Activated CD4-positive, alpha-beta T cell treated with anti-CD3 and anti-CD28 coated beads for 36 hours (primary cell): ENCODE measurements at regions of chr1 and their contacts with region 1.

Region 1: DNA sequence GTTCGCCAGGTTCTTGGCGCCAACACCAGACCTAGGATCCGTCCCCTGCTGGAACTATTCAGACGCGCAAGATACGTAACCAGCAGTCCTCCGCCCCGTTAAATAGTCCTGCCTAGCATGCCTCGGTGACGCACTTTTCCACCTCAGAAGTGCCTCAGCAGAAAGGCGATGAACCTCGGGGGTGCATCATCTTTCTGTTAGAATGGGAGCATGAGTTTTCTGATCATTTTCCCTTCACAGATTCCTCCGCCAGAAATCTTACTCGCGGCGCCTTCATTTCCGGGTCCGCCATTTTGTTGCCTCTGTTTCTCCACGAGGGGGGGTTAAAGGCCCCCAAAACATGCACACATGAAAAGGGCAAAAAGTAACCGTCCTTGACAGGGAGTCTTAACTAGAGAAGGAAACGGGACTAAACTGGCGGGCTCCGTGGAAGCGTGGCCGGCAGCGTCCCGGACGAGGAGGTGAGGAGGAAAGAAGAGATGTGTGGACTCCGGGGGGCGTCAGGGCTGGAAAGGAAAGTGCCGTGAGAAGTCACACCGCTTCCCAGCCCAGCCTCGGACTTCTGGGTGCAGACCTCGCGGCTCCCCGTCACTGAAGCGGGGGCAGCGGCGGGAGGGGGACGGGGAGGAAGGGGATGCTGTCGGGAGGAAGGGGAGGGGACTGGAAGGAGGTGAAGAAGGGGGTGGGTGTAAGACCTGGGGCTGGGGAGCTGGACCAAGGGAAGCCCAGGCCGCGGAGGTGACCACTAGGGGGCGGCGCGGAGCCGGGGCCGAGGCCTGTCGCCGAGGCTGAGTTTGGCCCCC is at the start of gene GABPB2:
- DNase-seq: peak; percentile 93
- ATAC-seq: peak; percentile 86
- H3K4me3 Mint-ChIP-seq: peak within 1 kb of the TSS; percentile 99
- H3K27ac Mint-ChIP-seq: peak within 1 kb of the TSS; percentile 100
- H3K4me1 Mint-ChIP-seq: peaks cover 18% of the 10 kb centered on the region
- H3K27me3 Mint-ChIP-seq: no peaks in the 10 kb centered on the region
- total RNA-seq, gene GABPB2: 16.6 to 19.2 TPM

Region 2: GRCh38 chr1:150321826-150322166 is 748.9 kb before region 1 on chr1:
- CTCF ChIA-PET with region 1: no interaction called
- POLR2A ChIA-PET with region 1: no interaction called
- intact Hi-C with region 1: loop called in 1 of 2 experiments (anchors 5 kb)
- DNase-seq: no peak
- ATAC-seq: no peak
- H3K4me3 Mint-ChIP-seq: peak overlapping the region; percentile 93
- H3K27ac Mint-ChIP-seq: peak overlapping the region; percentile 100
- H3K4me1 Mint-ChIP-seq: peaks cover 27% of the 10 kb centered on the region
- H3K27me3 Mint-ChIP-seq: no peaks in the 10 kb centered on the region

Region 3: GRCh38 chr1:150813058-150813707 is 257.5 kb before region 1 on chr1:
- CTCF ChIA-PET with region 1: no interaction called
- POLR2A ChIA-PET with region 1: no interaction called
- intact Hi-C with region 1: no loop called
- DNase-seq: peak; percentile 43
- ATAC-seq: no peak
- H3K4me3 Mint-ChIP-seq: no peak overlapping the region
- H3K27ac Mint-ChIP-seq: no peak overlapping the region
- H3K4me1 Mint-ChIP-seq: peaks cover 1% of the 10 kb centered on the region
- H3K27me3 Mint-ChIP-seq: no peaks in the 10 kb centered on the region

Region 4: DNA sequence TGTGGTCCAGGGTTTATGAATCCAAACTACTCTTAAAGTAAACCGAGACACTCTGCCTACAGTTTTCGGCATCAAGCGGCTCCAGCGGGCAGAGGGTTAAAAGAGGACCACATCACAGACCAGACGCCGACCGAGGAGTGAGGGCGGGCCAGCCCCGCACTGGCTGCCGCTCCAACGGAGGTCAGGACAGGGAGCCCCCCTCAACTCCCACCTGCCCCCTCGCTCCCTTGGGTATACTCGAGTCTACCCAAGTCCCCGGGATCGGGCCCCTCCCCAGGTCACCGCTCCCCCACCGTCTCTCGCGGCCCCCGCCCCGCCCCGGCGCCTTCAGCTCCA is 194.6 kb before region 1 on chr1:
- CTCF ChIA-PET with region 1: no interaction called
- POLR2A ChIA-PET with region 1: no interaction called
- intact Hi-C with region 1: loop called in 1 of 2 experiments (anchors 2 kb)
- DNase-seq: no peak
- ATAC-seq: peak; percentile 37
- H3K4me3 Mint-ChIP-seq: peak overlapping the region; percentile 88
- H3K27ac Mint-ChIP-seq: peak overlapping the region; percentile 95
- H3K4me1 Mint-ChIP-seq: peaks cover 25% of the 10 kb centered on the region
- H3K27me3 Mint-ChIP-seq: no peaks in the 10 kb centered on the region

Region 5: GRCh38 chr1:151059078-151059907 is 11.4 kb before region 1 on chr1 and contains the start of gene CDC42SE1:
- CTCF ChIA-PET with region 1: interaction called, 24 read pairs
- POLR2A ChIA-PET with region 1: interaction called, 4 read pairs
- intact Hi-C with region 1: loop called (anchors 1 kb)
- DNase-seq: peak; percentile 92
- ATAC-seq: peak; percentile 75
- H3K4me3 Mint-ChIP-seq: peak within 1 kb of the TSS; percentile 93
- H3K27ac Mint-ChIP-seq: peak within 1 kb of the TSS; percentile 98
- H3K4me1 Mint-ChIP-seq: peaks cover 54% of the 10 kb centered on the region
- H3K27me3 Mint-ChIP-seq: no peaks in the 10 kb centered on the region
- total RNA-seq, gene CDC42SE1: 95.4 to 101 TPM

Region 6: DNA sequence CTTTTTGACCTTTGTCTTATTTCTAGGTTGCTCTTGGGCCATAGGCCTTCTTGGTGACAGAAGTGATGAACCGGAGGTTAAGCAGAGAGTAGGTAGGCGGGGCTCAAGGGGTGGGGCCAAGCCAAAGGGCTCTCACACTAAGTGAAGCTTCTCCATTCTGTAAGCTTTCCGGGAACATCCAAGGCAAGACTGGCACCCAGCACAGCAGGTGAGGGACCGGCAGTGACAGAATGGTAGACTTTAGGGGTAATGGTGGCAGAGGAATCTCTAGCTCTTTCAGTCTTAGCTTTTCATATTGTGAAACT is 85.8 kb after region 1 on chr1 and contains the start of gene TNFAIP8L2:
- CTCF ChIA-PET with region 1: interaction called, 4 read pairs
- POLR2A ChIA-PET with region 1: interaction called, 4 read pairs
- intact Hi-C with region 1: loop called (anchors 1 to 2 kb)
- DNase-seq: peak; percentile 91
- ATAC-seq: peak; percentile 85
- H3K4me3 Mint-ChIP-seq: peak within 1 kb of the TSS; percentile 88
- H3K27ac Mint-ChIP-seq: peak within 1 kb of the TSS; percentile 99
- H3K4me1 Mint-ChIP-seq: peaks cover 44% of the 10 kb centered on the region
- H3K27me3 Mint-ChIP-seq: no peaks in the 10 kb centered on the region
- total RNA-seq, gene TNFAIP8L2: 18.4 to 19.2 TPM

Region 7: DNA sequence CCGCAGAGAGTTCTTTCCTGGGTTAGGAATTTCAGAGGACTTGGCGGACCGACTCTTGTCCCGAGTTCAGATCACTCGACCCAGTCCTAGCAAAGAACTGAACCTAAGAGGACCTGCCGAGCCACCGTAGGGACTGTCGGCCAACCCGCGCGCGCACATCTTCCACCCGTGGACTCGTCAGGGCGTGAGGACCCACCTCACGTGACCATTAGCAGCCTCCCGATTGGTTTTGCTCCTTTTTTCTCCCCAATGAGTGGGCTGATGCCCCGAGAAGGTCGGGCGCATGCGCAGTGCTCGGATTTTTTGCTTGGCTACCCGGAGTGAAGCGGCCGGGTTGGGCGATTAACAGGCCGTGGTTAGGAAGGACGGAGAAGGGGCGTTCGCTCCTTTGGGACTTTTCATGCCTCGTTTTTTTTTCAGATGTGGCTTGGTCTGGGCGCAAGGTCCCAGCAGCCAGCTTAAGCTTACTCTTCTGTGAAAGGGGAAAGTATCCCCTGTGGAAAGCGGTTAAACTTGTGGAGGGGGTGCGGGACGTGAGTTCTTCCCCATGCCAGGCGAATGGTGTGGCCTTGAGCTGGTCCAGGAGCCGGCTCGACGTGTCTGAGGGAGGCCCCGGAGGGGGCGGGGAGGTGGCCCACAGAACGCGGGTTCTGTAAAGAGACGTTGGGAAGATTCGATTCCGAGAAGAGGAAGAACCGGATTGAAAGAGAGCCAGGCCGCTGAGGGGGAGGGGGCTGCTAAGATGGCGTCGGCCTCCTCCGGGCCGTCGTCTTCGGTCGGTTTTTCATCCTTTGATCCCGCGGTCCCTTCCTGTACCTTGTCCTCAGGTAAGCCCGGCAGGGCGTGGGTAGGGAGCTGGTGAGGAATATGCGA is 127.8 kb after region 1 on chr1 and contains the start of gene PIP5K1A:
- CTCF ChIA-PET with region 1: no interaction called
- POLR2A ChIA-PET with region 1: no interaction called
- intact Hi-C with region 1: loop called in 1 of 2 experiments (anchors 2 kb)
- DNase-seq: peak; percentile 100
- ATAC-seq: peak; percentile 90
- H3K4me3 Mint-ChIP-seq: peak within 1 kb of the TSS; percentile 98
- H3K27ac Mint-ChIP-seq: peak within 1 kb of the TSS; percentile 100
- H3K4me1 Mint-ChIP-seq: peaks cover 38% of the 10 kb centered on the region
- H3K27me3 Mint-ChIP-seq: no peaks in the 10 kb centered on the region
- total RNA-seq, gene PIP5K1A: 74.5 to 85.1 TPM

Region 8: DNA sequence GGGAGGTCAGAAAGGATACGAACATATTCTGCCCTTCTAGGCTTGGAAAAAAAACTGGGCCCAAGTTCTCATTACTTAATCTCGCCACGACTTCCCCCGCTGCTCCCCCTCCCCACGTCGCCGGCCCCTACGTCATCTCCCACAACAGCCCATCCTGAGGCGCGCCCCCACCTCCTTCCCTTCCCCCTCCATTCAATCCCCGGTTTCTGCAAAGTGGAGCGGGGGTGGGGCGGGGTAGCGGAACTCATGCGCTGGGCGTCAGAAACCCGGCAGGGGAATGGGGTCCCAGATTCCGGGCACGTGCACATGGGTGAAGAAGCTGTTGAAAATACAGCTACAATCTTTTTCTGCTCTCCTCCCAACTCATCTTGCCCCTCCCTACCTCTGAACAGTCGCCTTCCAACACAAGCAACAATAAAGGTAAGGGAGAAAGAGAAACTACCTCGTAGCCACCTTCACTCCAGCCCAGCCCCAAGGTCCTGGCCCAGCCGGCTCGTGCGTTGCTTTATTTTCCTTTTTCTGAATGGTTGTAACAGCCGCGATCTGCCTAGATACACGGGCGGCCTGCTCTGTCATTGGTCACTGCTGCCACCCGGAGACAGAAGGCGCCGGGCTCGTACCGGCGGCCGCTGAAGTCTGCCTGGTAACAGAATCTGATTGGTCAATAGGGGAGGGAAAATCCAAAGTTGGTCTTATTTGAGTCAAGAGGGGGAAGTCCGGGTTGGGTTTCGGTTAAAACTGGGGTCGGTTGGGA is 276.3 kb after region 1 on chr1 and contains the start of gene RFX5:
- CTCF ChIA-PET with region 1: no interaction called
- POLR2A ChIA-PET with region 1: no interaction called
- intact Hi-C with region 1: loop called in 1 of 2 experiments (anchors 2 kb)
- DNase-seq: peak; percentile 96
- ATAC-seq: peak; percentile 98
- H3K4me3 Mint-ChIP-seq: peak within 1 kb of the TSS; percentile 96
- H3K27ac Mint-ChIP-seq: peak within 1 kb of the TSS; percentile 94
- H3K4me1 Mint-ChIP-seq: peaks cover 31% of the 10 kb centered on the region
- H3K27me3 Mint-ChIP-seq: no peaks in the 10 kb centered on the region
- total RNA-seq, gene RFX5: 47.6 to 50.4 TPM